ENCODE measurements at regions of chr20 and their contacts with region 1.

Region 1: DNA sequence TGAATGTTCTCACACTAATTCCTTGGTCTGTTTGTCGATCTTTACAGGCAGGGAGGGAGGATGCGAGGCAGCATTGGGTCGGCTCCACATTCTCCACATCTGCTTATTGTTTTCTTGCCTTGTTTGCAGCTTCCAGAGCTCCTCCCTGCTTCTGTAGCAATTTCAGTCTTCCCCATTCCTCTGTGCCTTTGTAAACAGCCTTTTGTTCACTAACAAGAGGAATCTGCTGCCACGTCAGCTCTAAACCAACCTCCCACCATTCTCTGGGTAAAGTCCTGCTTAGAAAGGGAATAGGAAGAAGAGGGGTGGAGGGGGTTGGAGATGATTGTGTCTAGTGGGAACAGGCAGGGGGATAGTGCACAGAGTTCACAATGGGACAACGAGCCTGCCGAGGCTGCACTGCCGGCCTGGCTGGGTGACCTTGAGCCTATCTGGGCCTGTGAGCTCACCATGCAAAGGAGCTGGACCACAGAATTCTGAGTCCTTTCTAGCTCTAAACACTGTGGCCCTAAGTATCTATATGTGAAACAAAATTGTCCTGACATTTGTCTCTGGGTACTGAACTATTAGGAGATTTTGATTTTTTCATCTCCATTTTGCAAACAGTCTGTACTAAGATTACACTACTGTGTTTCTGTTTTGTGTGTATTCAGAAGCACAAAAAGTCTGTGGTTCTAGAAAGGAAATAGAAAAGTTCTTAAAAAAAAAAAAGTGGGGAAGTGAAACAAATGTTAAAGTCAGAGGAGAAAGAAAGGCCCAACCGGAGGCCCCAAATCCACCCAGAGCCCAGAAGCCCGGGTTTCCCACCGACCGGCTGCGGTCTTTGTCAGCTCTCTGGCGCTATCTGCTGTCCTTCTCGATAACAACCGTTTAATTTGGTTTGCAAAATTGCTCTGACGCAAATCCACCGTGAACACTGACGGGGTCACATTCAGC is 1.4 kb upstream of the PRND start:
- DNase-seq: peak; percentile 87
- ATAC-seq: peak; percentile 89
- H3K4me3 Mint-ChIP-seq: no peak overlapping the region
- H3K27ac Mint-ChIP-seq: peak overlapping the region; percentile 42
- H3K4me1 Mint-ChIP-seq: peaks cover 8% of the 10 kb centered on the region
- H3K27me3 Mint-ChIP-seq: peaks cover under 1% of the 10 kb centered on the region

Region 2: DNA sequence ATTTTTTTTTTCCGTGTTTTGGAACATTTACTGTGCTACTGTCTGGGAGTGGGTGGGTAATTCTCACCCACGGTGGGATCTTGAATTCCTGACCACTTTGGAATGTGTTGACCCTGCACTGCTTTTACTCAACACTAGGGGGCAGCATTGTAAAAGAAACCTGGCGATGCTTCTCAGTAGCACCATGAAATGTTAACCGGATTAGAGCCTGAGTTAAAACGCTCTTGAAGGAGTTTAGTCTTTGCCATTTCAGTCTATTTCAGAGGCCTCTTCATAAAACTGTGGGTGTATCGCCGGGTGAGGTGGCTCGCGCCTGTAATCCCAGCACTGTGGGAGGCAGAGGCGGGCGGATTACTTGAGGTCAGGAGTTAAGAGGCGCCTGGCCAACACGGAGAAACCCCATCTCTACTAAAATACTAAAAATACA is 113.0 kb before region 1 on chr20:
- CTCF ChIA-PET with region 1: interaction called, 101 read pairs
- DNase-seq: peak; percentile 68
- ATAC-seq: peak; percentile 78
- H3K4me3 Mint-ChIP-seq: no peak overlapping the region
- H3K27ac Mint-ChIP-seq: no peak overlapping the region
- H3K4me1 Mint-ChIP-seq: no peaks in the 10 kb centered on the region
- H3K27me3 Mint-ChIP-seq: peaks cover 31% of the 10 kb centered on the region

Region 3: DNA sequence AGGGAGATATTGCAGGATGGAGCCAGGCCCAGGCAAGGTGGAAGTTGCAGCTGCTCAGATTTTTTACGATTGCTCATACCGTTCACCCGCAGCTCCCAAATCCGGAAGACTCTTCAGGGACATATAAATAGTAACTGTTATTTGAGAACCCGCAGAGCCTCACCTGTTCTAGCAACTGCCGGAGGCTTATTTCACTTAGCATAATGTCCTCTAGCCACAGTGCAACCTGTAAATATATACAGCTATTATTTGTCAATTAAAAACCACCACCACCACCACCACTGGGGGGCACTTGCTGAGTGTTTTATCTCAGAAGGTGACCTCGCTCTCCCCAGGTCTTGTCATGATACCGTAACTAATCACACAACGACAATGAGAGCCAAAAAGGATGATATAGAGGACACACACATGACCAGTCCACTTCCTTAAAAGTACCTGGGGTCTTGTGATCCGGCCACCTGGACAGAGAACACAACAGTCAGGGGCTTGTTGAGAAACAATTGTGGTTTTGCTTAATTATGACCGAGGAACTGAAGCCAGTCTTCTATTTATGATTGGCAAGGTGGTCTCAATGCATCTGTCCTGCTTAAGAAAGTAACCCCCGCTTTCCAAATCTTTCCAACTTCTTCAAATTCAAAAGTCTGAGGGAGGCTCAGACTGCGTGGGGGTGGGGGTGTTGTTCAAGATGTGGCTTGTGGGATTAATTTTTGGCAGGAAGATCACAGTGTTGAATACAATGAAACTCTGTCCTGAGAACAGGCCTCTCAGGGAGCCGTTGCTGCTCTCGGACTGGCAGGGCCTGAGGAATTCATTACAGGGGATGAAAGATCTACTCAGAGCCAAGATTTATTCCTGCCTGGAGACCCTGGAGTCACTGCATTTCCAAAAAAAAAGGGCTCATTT is 106.3 kb before region 1 on chr20:
- CTCF ChIA-PET with region 1: interaction called, 101 read pairs
- DNase-seq: peak; percentile 85
- ATAC-seq: peak; percentile 86
- H3K4me3 Mint-ChIP-seq: no peak overlapping the region
- H3K27ac Mint-ChIP-seq: peak overlapping the region; percentile 7
- H3K4me1 Mint-ChIP-seq: peaks cover 6% of the 10 kb centered on the region
- H3K27me3 Mint-ChIP-seq: peaks cover under 1% of the 10 kb centered on the region

Region 4: DNA sequence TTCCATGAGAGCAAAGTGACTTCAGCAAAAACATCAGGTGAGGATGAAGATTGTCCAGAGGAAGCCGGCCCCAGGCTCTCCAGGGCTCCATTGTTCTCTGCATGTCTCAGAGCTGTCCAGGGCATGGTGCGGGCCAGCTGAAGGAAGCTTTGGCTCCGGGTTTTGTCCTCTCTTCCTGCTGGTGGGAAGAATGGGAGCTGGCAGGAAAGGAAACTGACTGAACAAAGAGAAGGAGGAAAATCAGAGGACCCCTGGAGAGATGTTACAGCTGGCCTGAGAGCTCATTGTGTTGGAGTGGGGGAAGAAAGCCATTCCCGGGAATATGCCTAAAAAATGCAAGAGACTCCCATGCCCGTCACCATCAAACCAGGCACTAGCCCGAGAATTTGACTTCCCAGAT is 28.5 kb after region 1 on chr20:
- CTCF ChIA-PET with region 1: no interaction called
- DNase-seq: no peak
- ATAC-seq: no peak
- H3K4me3 Mint-ChIP-seq: no peak overlapping the region
- H3K27ac Mint-ChIP-seq: no peak overlapping the region
- H3K4me1 Mint-ChIP-seq: no peaks in the 10 kb centered on the region
- H3K27me3 Mint-ChIP-seq: peaks cover 22% of the 10 kb centered on the region

Measured in activated CD8-positive, alpha-beta memory T cell treated with anti-CD3 and anti-CD28 coated beads, Interleukin-2, amount 10 ng/mL, durations not matched to agents 7 days and 5 days (primary cell).